Vagina (tissue), 2 donors: ENCODE measurements at regions of chr7 and their contacts with region 1.

Region 1: GRCh38 chr7:94928173-94928707 is 20.8 kb downstream of the PPP1R9A start:
- DNase-seq: no peak
- H3K4me3 ChIP-seq: no peak overlapping the region
- H3K27ac ChIP-seq: no peak overlapping the region
- H3K4me1 ChIP-seq: no peaks in the 10 kb centered on the region
- H3K27me3 ChIP-seq: no peaks in the 10 kb centered on the region
- CTCF ChIP-seq: no peak
- POLR2A ChIP-seq: no peak

Region 2: DNA sequence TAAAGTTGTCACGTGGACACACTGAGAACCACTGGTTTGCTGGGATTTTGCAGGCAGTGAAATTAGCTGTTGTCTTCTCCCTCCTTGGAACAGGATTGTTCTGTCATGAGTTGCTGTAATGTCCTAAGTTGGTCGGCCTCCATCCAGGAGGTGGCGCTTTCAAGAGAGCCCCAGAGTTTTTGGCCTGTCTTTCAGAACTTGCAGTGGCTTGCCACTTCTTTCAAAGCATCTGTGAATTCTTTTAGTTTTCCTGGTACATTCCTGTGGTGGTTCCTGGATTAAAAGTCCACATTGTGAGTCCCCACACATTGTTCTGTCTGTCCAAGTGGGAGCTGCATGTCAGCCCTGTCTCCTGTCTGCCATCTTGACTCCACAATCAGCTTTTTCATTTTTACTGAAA is 262.3 kb after region 1 on chr7:
- intact Hi-C with region 1: loop called (anchors 5 kb)
- DNase-seq: no peak
- H3K4me3 ChIP-seq: no peak overlapping the region
- H3K27ac ChIP-seq: no peak overlapping the region
- H3K4me1 ChIP-seq: no peaks in the 10 kb centered on the region
- H3K27me3 ChIP-seq: no peaks in the 10 kb centered on the region
- CTCF ChIP-seq: no peak
- POLR2A ChIP-seq: no peak

Region 3: GRCh38 chr7:96300502-96300901 is 1372.3 kb after region 1 on chr7:
- intact Hi-C with region 1: no loop called
- DNase-seq: no peak
- H3K4me3 ChIP-seq: no peak overlapping the region
- H3K27ac ChIP-seq: no peak overlapping the region
- H3K4me1 ChIP-seq: peaks cover 21% of the 10 kb centered on the region
- H3K27me3 ChIP-seq: no peaks in the 10 kb centered on the region
- CTCF ChIP-seq: no peak
- POLR2A ChIP-seq: no peak